ENCODE measurements at regions of chr1 and their contacts with region 1.

Region 1: GRCh38 chr1:52460694-52461093 is 56.3 kb downstream of the PRPF38A start:
- DNase-seq: no peak
- ATAC-seq: no peak
- H3K4me3 ChIP-seq: no peak overlapping the region
- H3K4me3 Mint-ChIP-seq: no peak overlapping the region
- H3K27ac ChIP-seq: no peak overlapping the region
- H3K27ac Mint-ChIP-seq: no peak overlapping the region
- H3K4me1 ChIP-seq: no peaks in the 10 kb centered on the region
- H3K4me1 Mint-ChIP-seq: no peaks in the 10 kb centered on the region
- H3K27me3 ChIP-seq: no peaks in the 10 kb centered on the region
- H3K27me3 Mint-ChIP-seq: no peaks in the 10 kb centered on the region

Region 2: DNA sequence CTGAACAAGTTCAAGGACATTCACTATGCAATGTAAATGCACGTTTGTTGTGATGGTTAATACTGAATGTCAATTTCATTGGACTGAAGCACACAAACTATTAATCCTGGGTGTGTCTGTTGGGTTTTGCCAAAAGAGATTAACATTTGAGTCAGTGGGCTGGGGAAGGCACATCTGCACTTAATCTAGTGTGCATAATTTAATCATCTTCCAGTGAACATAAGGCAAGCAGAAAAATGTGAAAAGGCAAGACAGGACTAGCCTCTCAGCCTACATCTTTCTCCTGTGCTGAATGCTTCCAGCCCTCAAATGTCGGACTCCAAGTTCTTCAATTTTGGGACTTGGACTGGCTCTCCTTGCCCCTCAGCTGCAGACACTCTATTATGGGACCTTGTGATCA is 16.2 kb before region 1 on chr1:
- CTCF ChIA-PET with region 1: interaction called in 1 of 2 experiments, 3 read pairs
- POLR2A ChIA-PET with region 1: interaction called in 1 of 2 experiments, 11 read pairs
- DNase-seq: no peak
- ATAC-seq: no peak
- H3K4me3 ChIP-seq: no peak overlapping the region
- H3K4me3 Mint-ChIP-seq: no peak overlapping the region
- H3K27ac ChIP-seq: no peak overlapping the region
- H3K27ac Mint-ChIP-seq: no peak overlapping the region
- H3K4me1 ChIP-seq: no peaks in the 10 kb centered on the region
- H3K4me1 Mint-ChIP-seq: no peaks in the 10 kb centered on the region
- H3K27me3 ChIP-seq: no peaks in the 10 kb centered on the region
- H3K27me3 Mint-ChIP-seq: no peaks in the 10 kb centered on the region

Region 3: DNA sequence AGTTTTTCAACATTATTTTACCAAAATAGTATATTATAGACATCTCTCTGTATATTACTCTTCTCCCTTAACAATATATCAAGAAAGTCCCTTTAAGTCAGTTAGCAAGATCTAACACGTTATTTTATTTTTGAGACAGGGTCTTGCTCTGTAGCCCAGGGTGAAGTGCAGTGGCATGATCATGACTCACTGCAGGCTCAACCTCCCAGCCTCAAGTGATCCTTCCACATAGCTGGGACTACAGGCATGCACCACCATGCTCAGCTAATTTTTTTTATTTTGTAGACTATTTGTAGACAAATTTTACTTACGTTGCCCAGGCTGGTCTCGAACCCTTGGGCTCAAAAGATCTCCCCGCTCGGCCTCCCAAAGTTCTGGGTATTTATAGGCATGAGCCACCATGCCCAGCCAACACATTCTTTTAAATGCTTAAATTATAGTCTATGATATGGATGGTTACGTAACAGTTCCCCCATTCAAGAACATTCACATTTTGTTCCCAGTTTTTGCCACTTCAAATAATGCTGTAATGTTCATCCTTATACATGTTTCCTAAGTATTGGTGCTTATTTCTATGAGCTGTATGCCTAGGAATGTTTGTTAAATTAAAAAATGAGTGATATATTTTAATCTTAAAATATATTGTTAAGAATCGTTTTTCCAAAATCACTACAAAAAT is 21.8 kb after region 1 on chr1:
- CTCF ChIA-PET with region 1: no interaction called
- POLR2A ChIA-PET with region 1: no interaction called
- DNase-seq: no peak
- ATAC-seq: no peak
- H3K4me3 ChIP-seq: no peak overlapping the region
- H3K4me3 Mint-ChIP-seq: no peak overlapping the region
- H3K27ac ChIP-seq: no peak overlapping the region
- H3K27ac Mint-ChIP-seq: no peak overlapping the region
- H3K4me1 ChIP-seq: no peaks in the 10 kb centered on the region
- H3K4me1 Mint-ChIP-seq: peaks cover 0 to 3% (median 0%) of the 10 kb centered on the region in 3 donors
- H3K27me3 ChIP-seq: no peaks in the 10 kb centered on the region
- H3K27me3 Mint-ChIP-seq: no peaks in the 10 kb centered on the region

Region 4: GRCh38 chr1:52520148-52520547 is 59.5 kb after region 1 on chr1:
- CTCF ChIA-PET with region 1: no interaction called
- POLR2A ChIA-PET with region 1: interaction called in 1 of 2 experiments, 11 read pairs
- DNase-seq: no peak
- ATAC-seq: no peak
- H3K4me3 ChIP-seq: no peak overlapping the region
- H3K4me3 Mint-ChIP-seq: no peak overlapping the region
- H3K27ac ChIP-seq: no peak overlapping the region
- H3K27ac Mint-ChIP-seq: no peak overlapping the region
- H3K4me1 ChIP-seq: peaks cover 6 to 7% of the 10 kb centered on the region in 2 experiments
- H3K4me1 Mint-ChIP-seq: peaks cover 38 to 44% (median 43%) of the 10 kb centered on the region in 3 donors
- H3K27me3 ChIP-seq: no peaks in the 10 kb centered on the region
- H3K27me3 Mint-ChIP-seq: no peaks in the 10 kb centered on the region

Region 5: DNA sequence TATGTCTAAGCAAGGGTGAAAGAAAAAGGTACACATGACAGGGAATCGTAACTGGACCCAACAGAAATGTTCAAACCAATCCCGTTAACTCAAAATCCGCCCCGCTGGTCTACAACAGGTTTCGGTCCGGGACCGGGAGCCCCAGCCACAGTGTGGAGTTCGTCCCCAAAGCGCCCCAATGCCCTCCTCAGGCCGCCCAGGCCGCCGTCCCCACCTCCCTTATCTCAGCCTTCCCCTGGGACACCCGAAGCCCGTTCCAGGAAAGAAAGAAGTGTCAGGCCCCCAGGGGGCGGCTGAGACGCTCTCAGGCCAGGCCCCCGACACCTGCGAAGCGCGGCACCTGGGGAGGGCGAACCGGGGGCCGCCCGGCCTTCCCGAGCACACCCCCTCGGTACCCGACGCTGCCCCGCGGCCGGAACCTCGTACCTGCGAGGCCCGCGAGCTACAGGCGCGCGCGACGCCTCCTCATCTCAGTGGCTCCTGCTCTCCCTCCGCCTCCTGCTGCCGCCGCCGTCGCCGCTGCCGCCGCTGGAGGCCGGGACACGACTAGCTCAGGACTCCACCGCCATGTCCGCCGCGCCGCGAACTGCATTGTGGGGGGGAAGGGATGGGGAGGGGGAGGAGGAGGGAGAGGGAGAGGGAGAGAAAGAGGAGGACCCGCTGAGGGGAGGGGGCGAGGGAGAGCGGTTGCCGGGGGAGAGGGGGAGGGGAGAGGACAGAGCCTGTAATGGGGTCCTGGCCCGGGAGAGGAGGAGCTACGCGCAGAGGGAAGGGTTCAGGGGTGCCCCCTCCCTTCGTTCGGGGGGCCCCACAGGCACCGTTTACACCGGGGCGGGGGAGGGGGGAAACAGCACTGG is 92.0 kb after region 1 on chr1 and contains the start of gene TUT4:
- CTCF ChIA-PET with region 1: no interaction called
- POLR2A ChIA-PET with region 1: interaction called in 1 of 2 experiments, 11 read pairs
- DNase-seq: peak; percentile 53 to 83 (median 68)
- ATAC-seq: peak; percentile 58 to 63 (median 61)
- H3K4me3 ChIP-seq: peak within 1 kb of the TSS; percentile 86 to 97
- H3K4me3 Mint-ChIP-seq: peak within 1 kb of the TSS in 2 of 3 donors; percentile 69 to 75
- H3K27ac ChIP-seq: peak within 1 kb of the TSS; percentile 98
- H3K27ac Mint-ChIP-seq: peak within 1 kb of the TSS; percentile 77 to 85
- H3K4me1 ChIP-seq: peaks cover 16 to 38% of the 10 kb centered on the region in 2 experiments
- H3K4me1 Mint-ChIP-seq: peaks cover 44 to 46% (median 44%) of the 10 kb centered on the region in 3 donors
- H3K27me3 ChIP-seq: no peaks in the 10 kb centered on the region
- H3K27me3 Mint-ChIP-seq: no peaks in the 10 kb centered on the region
- total RNA-seq, gene TUT4: 109 to 143 (median 129) TPM

Region 6: DNA sequence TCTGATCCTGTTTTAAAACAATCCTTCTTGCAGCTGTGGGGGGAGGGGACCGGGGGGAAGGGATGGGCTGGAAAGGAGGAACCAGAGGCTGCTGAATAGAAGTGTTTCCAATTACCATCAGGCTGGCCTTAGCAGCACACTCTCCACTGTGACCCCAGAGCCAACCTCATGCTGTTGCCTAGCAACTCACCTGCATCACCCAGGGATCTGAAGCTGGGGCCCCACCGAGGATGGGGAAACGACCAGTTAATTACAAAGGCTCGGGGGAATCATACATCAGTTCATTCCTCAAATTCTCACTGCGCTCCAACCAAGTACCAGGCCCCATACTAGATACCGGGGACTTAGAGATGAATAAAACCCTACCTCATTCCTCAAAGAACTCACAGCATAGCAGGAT is 129.6 kb after region 1 on chr1:
- CTCF ChIA-PET with region 1: no interaction called
- POLR2A ChIA-PET with region 1: no interaction called
- DNase-seq: no peak
- ATAC-seq: no peak
- H3K4me3 ChIP-seq: no peak overlapping the region
- H3K4me3 Mint-ChIP-seq: no peak overlapping the region
- H3K27ac ChIP-seq: no peak overlapping the region
- H3K27ac Mint-ChIP-seq: no peak overlapping the region
- H3K4me1 ChIP-seq: no peaks in the 10 kb centered on the region
- H3K4me1 Mint-ChIP-seq: peaks cover 0 to 10% (median 0%) of the 10 kb centered on the region in 3 donors
- H3K27me3 ChIP-seq: no peaks in the 10 kb centered on the region
- H3K27me3 Mint-ChIP-seq: no peaks in the 10 kb centered on the region

Region 7: GRCh38 chr1:53091841-53092645 is 631.3 kb after region 1 on chr1:
- CTCF ChIA-PET with region 1: no interaction called
- POLR2A ChIA-PET with region 1: no interaction called
- DNase-seq: no peak
- ATAC-seq: no peak
- H3K4me3 ChIP-seq: no peak overlapping the region
- H3K4me3 Mint-ChIP-seq: no peak overlapping the region
- H3K27ac ChIP-seq: no peak overlapping the region
- H3K27ac Mint-ChIP-seq: no peak overlapping the region
- H3K4me1 ChIP-seq: no peaks in the 10 kb centered on the region
- H3K4me1 Mint-ChIP-seq: no peaks in the 10 kb centered on the region
- H3K27me3 ChIP-seq: peaks cover 0 to 15% of the 10 kb centered on the region in 2 experiments
- H3K27me3 Mint-ChIP-seq: no peaks in the 10 kb centered on the region

Measured in T-cell (primary cell).